Activated CD4-positive, alpha-beta T cell treated with anti-CD3 and anti-CD28 coated beads, Interleukin-2, amount 10 ng/mL, durations not matched to agents 24 days and 14 days (primary cell): ENCODE measurements at regions of chr16 and their contacts with region 1.

Region 1: GRCh38 chr16:48409839-48410611 is 24.8 kb upstream of the SIAH1 start:
- DNase-seq: no peak
- H3K4me3 Mint-ChIP-seq: no peak overlapping the region
- H3K27ac Mint-ChIP-seq: no peak overlapping the region
- H3K4me1 Mint-ChIP-seq: peaks cover 6% of the 10 kb centered on the region
- H3K27me3 Mint-ChIP-seq: peaks cover 3% of the 10 kb centered on the region

Region 2: GRCh38 chr16:48335951-48336350 is 74.1 kb before region 1 on chr16:
- intact Hi-C with region 1: no loop called
- DNase-seq: no peak
- H3K4me3 Mint-ChIP-seq: no peak overlapping the region
- H3K27ac Mint-ChIP-seq: no peak overlapping the region
- H3K4me1 Mint-ChIP-seq: peaks cover 7% of the 10 kb centered on the region
- H3K27me3 Mint-ChIP-seq: no peaks in the 10 kb centered on the region

Region 3: GRCh38 chr16:48347191-48347865 is 62.7 kb before region 1 on chr16:
- intact Hi-C with region 1: no loop called
- DNase-seq: no peak
- H3K4me3 Mint-ChIP-seq: no peak overlapping the region
- H3K27ac Mint-ChIP-seq: no peak overlapping the region
- H3K4me1 Mint-ChIP-seq: peaks cover 3% of the 10 kb centered on the region
- H3K27me3 Mint-ChIP-seq: no peaks in the 10 kb centered on the region

Region 4: GRCh38 chr16:48432136-48432535 is 22.1 kb after region 1 on chr16:
- intact Hi-C with region 1: no loop called
- DNase-seq: no peak
- H3K4me3 Mint-ChIP-seq: no peak overlapping the region
- H3K27ac Mint-ChIP-seq: no peak overlapping the region
- H3K4me1 Mint-ChIP-seq: peaks cover 10% of the 10 kb centered on the region
- H3K27me3 Mint-ChIP-seq: peaks cover 4% of the 10 kb centered on the region

Region 5: GRCh38 chr16:48459167-48459566 is 49.1 kb after region 1 on chr16:
- intact Hi-C with region 1: loop called (anchors 5 kb)
- DNase-seq: no peak
- H3K4me3 Mint-ChIP-seq: no peak overlapping the region
- H3K27ac Mint-ChIP-seq: peak overlapping the region; percentile 22
- H3K4me1 Mint-ChIP-seq: peaks cover 12% of the 10 kb centered on the region
- H3K27me3 Mint-ChIP-seq: peaks cover 24% of the 10 kb centered on the region